ENCODE measurements at regions of chr16 and their contacts with region 1.

Region 1: GRCh38 chr16:87387942-87388817 is 4.0 kb upstream of the MAP1LC3B start:
- DNase-seq: peak; percentile 73 to 97 (median 94)
- ATAC-seq: peak; percentile 59 to 76 (median 72)
- H3K4me3 ChIP-seq: no peak overlapping the region
- H3K27ac ChIP-seq: peak overlapping the region; percentile 60 to 97 (median 91)
- H3K4me1 ChIP-seq: peaks cover 16 to 38% (median 19%) of the 10 kb centered on the region in 3 donors
- H3K27me3 ChIP-seq: no peaks in the 10 kb centered on the region
- CTCF ChIP-seq: no peak

Region 2: GRCh38 chr16:87203060-87203656 is 185.0 kb before region 1 on chr16:
- intact Hi-C with region 1: no loop called
- DNase-seq: peak in 2 of 6 donors; percentile 36 to 71
- ATAC-seq: peak in 2 of 4 donors; percentile 53 to 70
- H3K4me3 ChIP-seq: no peak overlapping the region
- H3K27ac ChIP-seq: no peak overlapping the region
- H3K4me1 ChIP-seq: peaks cover 0 to 6% (median 0%) of the 10 kb centered on the region in 3 donors
- H3K27me3 ChIP-seq: no peaks in the 10 kb centered on the region
- CTCF ChIP-seq: peak in 3 of 4 donors; percentile 14 to 35 (median 22)

Region 3: DNA sequence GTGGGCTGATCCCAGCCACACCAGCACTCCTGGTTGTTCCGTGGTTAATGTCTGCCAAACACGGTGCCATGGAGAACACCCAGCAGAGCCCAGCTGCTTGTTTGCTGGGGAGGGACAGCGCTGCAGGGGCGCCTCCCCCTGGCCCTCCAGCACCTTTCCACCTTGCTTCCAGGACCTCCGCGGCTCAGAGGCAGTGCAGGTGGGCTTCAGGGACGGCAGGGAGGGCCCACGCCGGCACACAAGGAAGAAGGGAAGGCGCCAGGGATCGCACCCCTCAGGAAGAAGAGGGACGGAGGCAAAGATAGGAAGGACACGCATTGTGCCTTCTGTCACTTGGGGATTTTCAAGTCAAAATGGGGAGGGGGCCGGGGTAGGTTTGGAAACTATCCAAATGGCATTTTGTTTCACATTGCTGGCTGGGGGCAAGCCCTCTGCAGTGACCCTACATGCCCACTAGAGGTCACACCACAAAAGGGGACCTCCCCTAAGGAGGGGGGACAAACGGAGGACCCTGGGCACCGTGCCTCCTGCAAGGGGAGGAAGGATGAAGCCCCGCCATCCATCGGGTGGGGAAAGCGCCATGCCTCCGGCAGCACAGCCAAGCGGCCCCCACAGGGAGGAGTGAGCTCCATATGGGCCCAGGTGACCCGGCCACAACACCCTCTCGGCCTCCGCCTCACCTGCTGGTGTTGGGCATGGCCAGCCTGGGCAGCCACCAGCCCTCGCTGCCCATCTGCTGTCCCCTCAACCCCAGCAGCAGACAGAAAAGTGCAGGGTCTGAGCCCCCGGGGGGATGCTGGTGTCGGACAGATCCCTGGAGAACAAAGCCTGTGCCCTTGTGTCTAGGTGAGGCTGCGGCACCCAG is 63.5 kb before region 1 on chr16:
- intact Hi-C with region 1: loop called in 1 of 3 experiments (anchors 10 kb)
- DNase-seq: peak in 2 of 6 donors; percentile 57 to 82
- ATAC-seq: peak; percentile 55 to 82 (median 74)
- H3K4me3 ChIP-seq: no peak overlapping the region
- H3K27ac ChIP-seq: no peak overlapping the region
- H3K4me1 ChIP-seq: no peaks in the 10 kb centered on the region
- H3K27me3 ChIP-seq: no peaks in the 10 kb centered on the region
- CTCF ChIP-seq: peak; percentile 71 to 85 (median 78)